ENCODE measurements at regions of chr2 and their contacts with region 1.

Region 1: DNA sequence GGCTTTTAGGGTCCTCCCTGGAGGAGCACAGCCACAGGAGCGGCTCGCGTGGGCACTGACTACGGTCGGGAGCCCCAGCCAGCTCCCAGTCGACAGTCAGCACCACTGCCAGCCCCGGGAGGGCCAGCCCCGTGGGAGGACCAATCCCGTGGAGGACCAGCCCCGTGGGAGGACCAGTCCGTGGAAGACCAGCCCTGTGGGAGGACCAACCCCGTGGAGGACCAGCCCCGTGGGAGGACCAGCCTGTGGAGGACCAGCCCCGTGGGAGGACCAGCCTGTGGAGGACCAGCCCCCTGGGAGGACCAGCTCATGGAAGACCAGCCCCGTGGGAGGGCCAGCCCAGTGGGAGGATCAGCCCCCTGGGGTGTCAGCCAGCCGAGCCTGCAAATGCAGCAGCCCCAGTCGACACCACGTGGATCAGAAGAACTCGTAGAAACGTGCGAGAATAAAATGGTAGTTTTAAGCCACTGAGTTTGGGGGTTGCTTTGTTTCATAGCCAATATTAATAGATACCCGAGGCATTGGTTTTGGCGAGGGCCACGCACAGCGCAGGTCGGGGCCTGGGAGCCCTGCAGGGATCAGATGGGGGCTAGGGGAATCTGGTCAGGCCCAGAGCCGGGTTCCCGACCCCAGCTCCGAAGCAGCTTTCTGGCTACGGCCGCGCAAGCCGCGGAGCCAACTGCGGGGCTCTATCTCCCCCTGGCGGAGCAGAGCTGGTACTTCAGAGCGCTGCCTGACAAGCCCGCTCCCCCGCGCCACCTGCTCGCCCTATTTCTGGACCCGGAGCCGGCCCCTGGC is 73.0 kb downstream of the TEX51 start:
- DNase-seq: peak; percentile 20
- ATAC-seq: peak; percentile 92
- H3K4me3 ChIP-seq: peak overlapping the region; percentile 27 to 55
- H3K27ac ChIP-seq: no peak overlapping the region
- H3K4me1 ChIP-seq: 0 out of 2 replicates have a peak, but pooled peaks cover 2% of the 10 kb centered on the region
- H3K27me3 ChIP-seq: peaks cover 17% of the 10 kb centered on the region
- CTCF ChIP-seq: peak; percentile 97

Region 2: GRCh38 chr2:126802774-126803433 is 168.8 kb before region 1 on chr2:
- CTCF ChIA-PET with region 1: no interaction called
- POLR2A ChIA-PET with region 1: no interaction called
- in situ Hi-C with region 1: no loop called
- intact Hi-C with region 1: loop called (anchors 10 kb)
- DNase-seq: no peak
- ATAC-seq: no peak
- H3K4me3 ChIP-seq: no peak overlapping the region
- H3K27ac ChIP-seq: no peak overlapping the region
- H3K4me1 ChIP-seq: no peaks in the 10 kb centered on the region
- H3K27me3 ChIP-seq: peaks cover 3% of the 10 kb centered on the region; the same call in 1 of the 2 replicates
- CTCF ChIP-seq: no peak